ENCODE measurements at regions of chr1 and their contacts with region 1.

Region 1: GRCh38 chr1:65958561-65959350 is 166.1 kb downstream of the PDE4B start:
- ATAC-seq: peak; percentile 49 to 80 (median 74)
- H3K4me3 ChIP-seq: no peak overlapping the region
- H3K27ac ChIP-seq: no peak overlapping the region
- H3K4me1 ChIP-seq: peaks cover 2 to 4% of the 10 kb centered on the region in 2 donors

Region 2: GRCh38 chr1:66271216-66271903 is 312.6 kb after region 1 on chr1:
- in situ Hi-C with region 1: no loop called
- ATAC-seq: peak; percentile 80 to 98 (median 89)
- H3K4me3 ChIP-seq: no peak overlapping the region
- H3K27ac ChIP-seq: no peak overlapping the region
- H3K4me1 ChIP-seq: peaks cover 0 to 14% of the 10 kb centered on the region in 2 donors

Region 3: GRCh38 chr1:66446261-66447001 is 487.7 kb after region 1 on chr1:
- in situ Hi-C with region 1: loop called in 4 of 9 experiments (anchors 10 to 25 kb)
- ATAC-seq: peak; percentile 58 to 79 (median 68)
- H3K4me3 ChIP-seq: no peak overlapping the region
- H3K27ac ChIP-seq: no peak overlapping the region
- H3K4me1 ChIP-seq: peaks cover 2 to 5% of the 10 kb centered on the region in 2 donors

Region 4: DNA sequence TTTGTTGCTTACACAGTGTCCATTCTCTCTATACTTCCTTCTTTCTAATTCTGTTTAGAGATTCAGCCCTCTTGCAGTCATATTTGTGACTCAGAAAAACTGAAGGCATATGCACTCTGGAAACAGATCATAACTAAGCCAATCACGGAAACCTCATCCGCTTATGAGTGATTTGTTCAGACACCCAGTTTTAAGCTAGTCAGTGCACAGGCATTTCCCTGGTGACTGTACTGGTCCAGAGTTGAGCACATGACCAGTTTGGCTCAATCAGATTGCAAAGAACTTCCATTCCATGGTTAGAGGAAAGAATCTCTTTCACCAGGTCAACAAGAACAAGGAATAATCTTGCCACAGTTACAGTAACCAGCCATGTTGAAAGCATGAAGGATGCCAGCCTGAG is 506.0 kb after region 1 on chr1:
- in situ Hi-C with region 1: loop called in 2 of 9 experiments (anchors 25 kb)
- ATAC-seq: peak in 3 of 8 experiments; percentile 47 to 82 (median 74)
- H3K4me3 ChIP-seq: no peak overlapping the region
- H3K27ac ChIP-seq: no peak overlapping the region
- H3K4me1 ChIP-seq: no peaks in the 10 kb centered on the region

Region 5: DNA sequence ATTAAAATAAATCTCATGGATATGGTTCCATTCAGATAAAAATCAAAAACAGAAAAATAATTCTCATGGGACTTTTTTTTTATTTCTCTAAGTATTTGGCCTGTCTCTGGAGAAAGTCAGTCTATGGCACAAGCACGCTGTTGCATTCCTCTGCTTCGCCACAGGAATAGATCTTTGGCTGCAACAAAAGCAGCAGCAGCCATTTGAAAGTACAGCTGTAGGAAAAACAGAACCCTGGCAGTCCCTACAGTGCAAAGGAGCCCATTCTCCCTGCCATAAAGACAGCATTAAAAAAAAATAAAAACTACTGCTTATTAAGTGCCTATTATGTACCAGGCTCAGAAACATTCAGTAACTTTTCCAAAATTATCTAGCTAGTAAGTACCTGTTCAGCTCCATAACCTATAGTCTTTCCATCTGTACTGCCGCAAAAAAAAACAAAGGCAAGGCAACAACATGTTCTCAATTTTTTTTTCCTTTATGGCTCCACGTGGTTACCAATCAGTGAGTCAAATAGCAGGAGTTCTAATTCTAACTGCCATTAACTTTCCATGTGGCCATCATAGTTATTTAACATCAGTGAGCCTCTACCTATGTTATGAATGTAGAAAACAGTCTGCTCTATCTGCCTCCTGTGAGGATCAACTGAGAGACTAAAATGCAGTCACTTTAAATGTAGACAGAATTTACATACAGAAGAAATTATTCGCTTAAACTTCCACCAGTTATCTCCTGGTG is 1072.5 kb after region 1 on chr1:
- in situ Hi-C with region 1: no loop called
- ATAC-seq: peak in 1 of 8 experiments; percentile 20
- H3K4me3 ChIP-seq: no peak overlapping the region
- H3K27ac ChIP-seq: no peak overlapping the region
- H3K4me1 ChIP-seq: no peaks in the 10 kb centered on the region